MCF 10A (cell line): ENCODE measurements at regions of chr3 and their contacts with region 1.

Region 1: GRCh38 chr3:152026033-152026556 is 152.7 kb downstream of the SUCNR1 start:
- DNase-seq: peak; percentile 75
- H3K4me3 Mint-ChIP-seq: no peak overlapping the region
- H3K27ac Mint-ChIP-seq: no peak overlapping the region
- H3K4me1 Mint-ChIP-seq: peaks cover 38% of the 10 kb centered on the region
- H3K27me3 Mint-ChIP-seq: no peaks in the 10 kb centered on the region
- CTCF ChIP-seq: peak; percentile 30

Region 2: GRCh38 chr3:151890721-151891141 is 135.4 kb before region 1 on chr3:
- CTCF ChIA-PET with region 1: no interaction called
- POLR2A ChIA-PET with region 1: no interaction called
- intact Hi-C with region 1: no loop called
- DNase-seq: peak; percentile 63
- H3K4me3 Mint-ChIP-seq: no peak overlapping the region
- H3K27ac Mint-ChIP-seq: peak overlapping the region; percentile 31
- H3K4me1 Mint-ChIP-seq: peaks cover 8% of the 10 kb centered on the region
- H3K27me3 Mint-ChIP-seq: no peaks in the 10 kb centered on the region
- CTCF ChIP-seq: no peak

Region 3: GRCh38 chr3:151925876-151926275 is 100.2 kb before region 1 on chr3:
- CTCF ChIA-PET with region 1: no interaction called
- POLR2A ChIA-PET with region 1: no interaction called
- intact Hi-C with region 1: loop called (anchors 10 kb)
- DNase-seq: peak; percentile 72
- H3K4me3 Mint-ChIP-seq: no peak overlapping the region
- H3K27ac Mint-ChIP-seq: peak overlapping the region; percentile 81
- H3K4me1 Mint-ChIP-seq: peaks cover 40% of the 10 kb centered on the region
- H3K27me3 Mint-ChIP-seq: no peaks in the 10 kb centered on the region
- CTCF ChIP-seq: no peak

Region 4: DNA sequence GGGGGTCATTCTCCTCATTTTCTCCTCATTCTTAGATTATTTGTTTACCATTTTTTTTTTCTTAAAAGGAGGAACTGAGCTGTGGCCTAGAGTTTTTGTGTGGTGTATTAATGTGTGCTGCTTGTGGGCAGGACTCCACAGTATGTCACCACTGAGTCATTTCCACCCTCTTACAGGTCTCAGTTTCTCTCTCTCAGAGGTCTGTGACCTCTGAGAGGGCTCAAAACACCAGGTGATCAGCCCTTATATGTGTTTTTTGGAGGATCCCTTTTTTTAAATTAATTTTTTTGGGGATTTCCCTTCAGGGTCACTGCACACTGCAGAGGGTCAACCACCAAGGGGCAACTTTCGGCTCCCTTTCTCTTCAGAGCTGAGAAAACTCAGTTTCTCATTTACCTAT is 13.8 kb after region 1 on chr3:
- CTCF ChIA-PET with region 1: interaction called, 4 read pairs
- POLR2A ChIA-PET with region 1: interaction called, 13 read pairs
- intact Hi-C with region 1: no loop called
- DNase-seq: no peak
- H3K4me3 Mint-ChIP-seq: no peak overlapping the region
- H3K27ac Mint-ChIP-seq: no peak overlapping the region
- H3K4me1 Mint-ChIP-seq: no peaks in the 10 kb centered on the region
- H3K27me3 Mint-ChIP-seq: peaks cover 48% of the 10 kb centered on the region
- CTCF ChIP-seq: no peak

Region 5: DNA sequence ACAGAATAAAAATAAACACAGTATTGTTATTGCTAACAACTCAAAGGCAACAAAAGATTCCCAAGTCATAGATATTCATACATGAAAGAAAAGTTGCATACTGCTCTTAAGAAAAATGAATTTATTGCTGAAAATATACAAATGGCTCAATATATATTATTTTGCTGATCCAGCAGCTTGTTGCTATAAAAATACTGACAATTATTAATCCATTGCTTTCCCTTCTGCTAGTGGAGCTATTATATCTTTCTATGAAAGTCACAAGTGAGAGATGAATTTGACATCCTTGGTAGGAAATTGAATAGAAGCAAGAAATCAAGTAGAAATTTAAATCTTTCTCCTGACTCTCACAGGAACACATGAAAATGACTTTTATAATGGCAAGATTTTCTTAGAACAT is 63.4 kb after region 1 on chr3:
- CTCF ChIA-PET with region 1: no interaction called
- POLR2A ChIA-PET with region 1: no interaction called
- intact Hi-C with region 1: no loop called
- DNase-seq: no peak
- H3K4me3 Mint-ChIP-seq: no peak overlapping the region
- H3K27ac Mint-ChIP-seq: no peak overlapping the region
- H3K4me1 Mint-ChIP-seq: no peaks in the 10 kb centered on the region
- H3K27me3 Mint-ChIP-seq: no peaks in the 10 kb centered on the region
- CTCF ChIP-seq: no peak

Region 6: DNA sequence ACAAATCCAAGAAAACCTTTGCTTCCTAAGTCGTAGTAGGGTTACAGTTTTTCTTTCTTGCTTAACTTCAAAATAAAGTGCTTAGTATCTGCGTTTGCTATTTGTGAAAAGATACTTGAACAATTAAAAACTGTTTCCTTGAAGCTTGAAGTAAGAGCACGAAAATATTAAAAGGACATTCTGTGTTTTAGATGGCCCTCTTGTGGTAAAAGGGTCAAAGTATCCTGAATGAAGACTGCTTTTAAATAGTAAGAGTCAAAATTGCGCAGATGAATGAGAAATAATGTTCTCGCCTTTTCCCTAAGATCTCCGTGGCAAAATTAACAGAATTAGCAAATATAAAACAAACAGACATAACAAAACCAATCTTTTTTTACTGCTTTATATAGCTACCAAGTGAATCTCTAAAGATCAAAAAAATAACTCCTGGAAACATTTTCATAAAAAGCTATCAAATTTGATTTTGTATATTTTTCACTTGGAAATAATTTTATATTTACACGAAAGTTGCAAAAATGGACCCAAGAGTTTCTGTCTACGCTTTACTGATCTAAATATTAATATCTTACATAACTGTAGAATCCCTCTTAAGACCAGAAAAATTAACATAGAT is 418.0 kb after region 1 on chr3:
- CTCF ChIA-PET with region 1: no interaction called
- POLR2A ChIA-PET with region 1: interaction called, 4 read pairs
- intact Hi-C with region 1: loop called (anchors 1 kb)
- DNase-seq: peak; percentile 68
- H3K4me3 Mint-ChIP-seq: no peak overlapping the region
- H3K27ac Mint-ChIP-seq: no peak overlapping the region
- H3K4me1 Mint-ChIP-seq: peaks cover 18% of the 10 kb centered on the region
- H3K27me3 Mint-ChIP-seq: no peaks in the 10 kb centered on the region
- CTCF ChIP-seq: peak; percentile 56